Lower lobe of right lung (tissue), 2 donors: ENCODE measurements at regions of chr12 and their contacts with region 1.

Region 1: GRCh38 chr12:63836936-63837335 is 7.6 kb upstream of the SRGAP1 start:
- DNase-seq: no peak
- ATAC-seq: no peak
- H3K4me3 ChIP-seq: no peak overlapping the region
- H3K27ac ChIP-seq: no peak overlapping the region
- H3K4me1 ChIP-seq: no peaks in the 10 kb centered on the region
- H3K27me3 ChIP-seq: no peaks in the 10 kb centered on the region
- CTCF ChIP-seq: no peak

Region 2: GRCh38 chr12:64256166-64256800 is 419.3 kb after region 1 on chr12:
- intact Hi-C with region 1: loop called (anchors 5 kb)
- DNase-seq: no peak
- ATAC-seq: peak in 1 of 2 donors; percentile 54
- H3K4me3 ChIP-seq: no peak overlapping the region
- H3K27ac ChIP-seq: no peak overlapping the region
- H3K4me1 ChIP-seq: peaks cover 6% of the 10 kb centered on the region
- H3K27me3 ChIP-seq: no peaks in the 10 kb centered on the region
- CTCF ChIP-seq: peak; percentile 71